ENCODE measurements at regions of chr17 and their contacts with region 1.

Region 1: GRCh38 chr17:37406635-37407461 is at the starts of genes ACACA and TADA2A:
- DNase-seq: peak; percentile 67 to 75 (median 74)
- H3K4me3 ChIP-seq: peak within 1 kb of the TSS; percentile 87 to 99 (median 90)
- H3K4me3 Mint-ChIP-seq: peak within 1 kb of the TSS; percentile 98 to 99
- H3K27ac ChIP-seq: peak within 1 kb of the TSS; percentile 74 to 92
- H3K27ac Mint-ChIP-seq: peak within 1 kb of the TSS; percentile 82 to 96 (median 91)
- H3K4me1 ChIP-seq: peaks cover 17 to 29% of the 10 kb centered on the region in 2 donors
- H3K4me1 Mint-ChIP-seq: peaks cover 29% of the 10 kb centered on the region
- H3K27me3 ChIP-seq: no peaks in the 10 kb centered on the region
- H3K27me3 Mint-ChIP-seq: no peaks in the 10 kb centered on the region
- CTCF ChIP-seq: no peak
- polyA plus RNA-seq, gene ACACA: 3.5 to 4.6 (median 3.8) TPM
- polyA plus RNA-seq, gene TADA2A: 2.9 to 8.2 (median 4.3) TPM

Region 2: DNA sequence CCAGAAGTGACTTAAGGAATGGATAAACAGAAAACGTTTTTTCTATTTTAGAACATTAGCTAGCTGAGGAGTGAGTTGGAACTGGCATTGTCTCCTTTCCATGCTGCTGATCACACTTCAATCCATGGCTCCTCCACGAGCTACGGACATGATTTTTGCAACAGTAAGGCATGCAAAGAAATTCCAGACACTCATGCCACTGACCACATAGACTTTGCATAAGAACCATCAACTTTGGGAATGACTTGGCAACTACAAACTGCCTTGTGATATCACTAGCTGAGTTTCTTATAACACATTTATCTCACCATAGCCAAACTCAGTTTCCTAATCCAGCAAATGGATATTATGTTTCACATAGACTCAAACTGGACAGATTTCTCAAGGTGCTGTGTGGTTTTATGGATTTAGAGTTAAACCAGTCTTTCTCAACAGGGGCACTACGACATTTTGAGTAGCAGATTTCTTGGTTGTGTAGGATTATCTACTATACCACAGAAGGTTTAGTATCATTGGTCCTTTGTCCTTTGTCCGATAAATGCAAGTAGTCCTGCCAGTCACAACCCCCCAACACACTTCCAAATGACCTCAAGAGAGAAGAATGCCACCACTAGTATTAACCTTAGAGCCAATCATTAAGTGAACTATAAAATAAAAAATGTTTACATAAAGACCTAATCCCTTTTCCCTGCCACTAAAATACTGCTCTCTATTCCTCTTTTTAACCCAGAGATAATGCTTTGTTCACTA is 79.3 kb before region 1 on chr17:
- intact Hi-C with region 1: no loop called
- DNase-seq: no peak
- H3K4me3 ChIP-seq: no peak overlapping the region
- H3K4me3 Mint-ChIP-seq: no peak overlapping the region
- H3K27ac ChIP-seq: no peak overlapping the region
- H3K27ac Mint-ChIP-seq: peak overlapping the region in 1 of 7 donors; percentile 10
- H3K4me1 ChIP-seq: no peaks in the 10 kb centered on the region
- H3K4me1 Mint-ChIP-seq: no peaks in the 10 kb centered on the region
- H3K27me3 ChIP-seq: no peaks in the 10 kb centered on the region
- H3K27me3 Mint-ChIP-seq: no peaks in the 10 kb centered on the region
- CTCF ChIP-seq: no peak

Region 3: DNA sequence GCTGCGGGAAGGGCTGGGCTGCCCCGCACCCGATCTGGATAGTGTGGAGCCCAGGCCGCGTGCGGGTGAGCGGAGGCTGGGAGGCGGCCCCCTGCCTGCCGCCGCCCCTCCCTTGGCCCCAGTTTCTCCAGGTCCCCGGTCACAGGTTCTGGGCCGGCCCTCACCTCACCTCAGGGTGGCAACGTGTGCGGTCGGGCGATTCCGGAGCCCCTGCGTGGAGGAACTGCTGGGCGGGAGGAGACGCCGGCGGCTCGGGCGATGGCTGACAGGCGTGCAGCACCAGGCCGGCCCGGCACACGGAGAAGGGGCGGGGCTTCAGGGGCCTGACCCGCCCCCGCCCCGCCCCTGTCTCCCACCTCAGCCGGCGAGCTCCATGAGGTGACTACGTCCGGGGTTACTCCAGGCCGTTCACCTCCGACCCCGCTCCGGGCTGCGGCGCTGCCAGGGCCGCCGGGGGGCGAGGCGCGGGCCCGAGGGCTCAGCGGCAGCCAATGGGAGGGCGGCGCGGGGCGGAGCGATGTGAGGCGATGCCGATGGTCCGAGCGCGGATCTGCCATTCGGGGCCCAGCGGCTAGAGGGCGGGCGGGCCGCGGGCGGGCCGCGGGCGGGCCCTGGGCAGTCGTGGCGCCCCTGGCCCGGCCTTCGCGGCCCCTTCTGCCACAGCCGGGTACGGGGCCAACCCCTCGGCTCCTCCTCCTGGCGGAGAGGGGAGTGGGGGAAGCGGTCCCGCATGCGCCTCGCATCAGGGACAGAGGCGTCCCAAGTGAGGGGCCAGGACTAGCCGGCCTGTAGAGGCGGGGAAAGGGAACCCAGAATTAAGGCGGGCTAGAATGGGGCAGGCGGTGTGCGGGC is 47.8 kb before region 1 on chr17:
- intact Hi-C with region 1: loop called in 1 of 2 experiments (anchors 5 kb)
- DNase-seq: peak; percentile 86 to 90 (median 86)
- H3K4me3 ChIP-seq: peak overlapping the region; percentile 58 to 90 (median 83)
- H3K4me3 Mint-ChIP-seq: peak overlapping the region; percentile 85 to 92
- H3K27ac ChIP-seq: peak overlapping the region; percentile 26 to 76
- H3K27ac Mint-ChIP-seq: peak overlapping the region in 5 of 7 donors; percentile 70 to 87 (median 79)
- H3K4me1 ChIP-seq: peaks cover 20 to 27% of the 10 kb centered on the region in 2 donors
- H3K4me1 Mint-ChIP-seq: peaks cover 26% of the 10 kb centered on the region
- H3K27me3 ChIP-seq: no peaks in the 10 kb centered on the region
- H3K27me3 Mint-ChIP-seq: peaks cover 0 to 3% (median 3%) of the 10 kb centered on the region in 3 donors
- CTCF ChIP-seq: peak; percentile 67

Region 4: DNA sequence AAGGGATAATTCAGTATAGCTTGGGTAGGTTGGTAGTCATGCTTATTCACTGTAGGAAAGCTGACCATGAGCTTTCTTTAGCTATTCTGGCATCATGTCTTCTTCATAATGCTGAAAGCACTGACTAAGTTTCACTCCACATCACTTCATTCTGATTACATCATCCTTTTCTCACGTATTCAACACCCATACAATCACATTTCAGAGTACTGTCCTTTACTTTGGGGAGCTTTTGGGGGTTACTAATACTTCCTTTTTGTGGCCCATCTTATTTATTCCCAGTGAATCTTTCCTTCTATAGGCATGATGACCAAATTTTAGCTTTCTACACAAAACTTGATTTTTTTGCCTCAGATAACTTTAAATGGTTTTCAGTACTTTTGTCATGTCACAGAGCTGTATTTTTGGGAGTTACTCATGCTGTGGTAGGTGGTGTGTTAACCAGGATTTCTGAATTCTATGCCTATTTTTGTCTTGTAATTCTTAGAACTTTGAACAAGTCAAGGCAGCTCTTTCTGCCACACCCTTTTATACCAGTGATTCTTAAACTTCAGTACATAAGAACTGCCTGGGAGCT is 23.3 kb after region 1 on chr17:
- intact Hi-C with region 1: no loop called
- DNase-seq: no peak
- H3K4me3 ChIP-seq: no peak overlapping the region
- H3K4me3 Mint-ChIP-seq: no peak overlapping the region
- H3K27ac ChIP-seq: peak overlapping the region in 1 of 2 donors; percentile 9
- H3K27ac Mint-ChIP-seq: no peak overlapping the region
- H3K4me1 ChIP-seq: no peaks in the 10 kb centered on the region
- H3K4me1 Mint-ChIP-seq: no peaks in the 10 kb centered on the region
- H3K27me3 ChIP-seq: no peaks in the 10 kb centered on the region
- H3K27me3 Mint-ChIP-seq: peaks cover 0 to 3% (median 0%) of the 10 kb centered on the region in 3 donors
- CTCF ChIP-seq: no peak